T-cell (primary cell): ENCODE measurements at regions of chr9 and their contacts with region 1.

Region 1: GRCh38 chr9:19102631-19103345 is at the start of gene HAUS6:
- DNase-seq: peak; percentile 89 to 98 (median 94)
- ATAC-seq: peak; percentile 94 to 95 (median 94)
- H3K4me3 ChIP-seq: peak within 1 kb of the TSS; percentile 81 to 82
- H3K4me3 Mint-ChIP-seq: peak within 1 kb of the TSS; percentile 92 to 96 (median 96)
- H3K27ac ChIP-seq: peak within 1 kb of the TSS; percentile 80
- H3K27ac Mint-ChIP-seq: peak within 1 kb of the TSS; percentile 89 to 96
- H3K4me1 ChIP-seq: peaks cover 12 to 21% of the 10 kb centered on the region in 2 experiments
- H3K4me1 Mint-ChIP-seq: peaks cover 27 to 38% (median 31%) of the 10 kb centered on the region in 3 donors
- H3K27me3 ChIP-seq: no peaks in the 10 kb centered on the region
- H3K27me3 Mint-ChIP-seq: no peaks in the 10 kb centered on the region
- total RNA-seq, gene HAUS6: 8.7 to 17.0 (median 15.1) TPM

Region 2: DNA sequence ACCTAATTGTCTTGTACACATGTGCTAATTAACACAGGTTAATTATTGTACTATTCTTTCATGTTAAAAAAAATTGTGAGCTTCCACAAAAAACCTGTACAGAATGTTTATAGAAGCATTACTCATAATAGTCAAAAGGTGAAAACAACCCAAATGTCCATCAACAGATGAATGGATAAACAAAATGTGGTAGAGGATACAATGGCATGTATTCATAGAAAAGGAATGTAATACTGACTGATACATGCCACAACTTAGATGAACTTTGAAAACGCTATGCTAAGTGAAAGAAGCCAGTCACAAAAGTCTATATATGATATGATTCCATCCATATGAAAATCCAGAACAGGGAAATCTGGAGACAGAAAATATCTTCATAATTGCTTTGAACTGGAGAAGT is 28.0 kb before region 1 on chr9:
- CTCF ChIA-PET with region 1: no interaction called
- POLR2A ChIA-PET with region 1: no interaction called
- DNase-seq: no peak
- ATAC-seq: no peak
- H3K4me3 ChIP-seq: no peak overlapping the region
- H3K4me3 Mint-ChIP-seq: no peak overlapping the region
- H3K27ac ChIP-seq: no peak overlapping the region
- H3K27ac Mint-ChIP-seq: no peak overlapping the region
- H3K4me1 ChIP-seq: no peaks in the 10 kb centered on the region
- H3K4me1 Mint-ChIP-seq: peaks cover 0 to 8% (median 7%) of the 10 kb centered on the region in 3 donors
- H3K27me3 ChIP-seq: no peaks in the 10 kb centered on the region
- H3K27me3 Mint-ChIP-seq: no peaks in the 10 kb centered on the region

Region 3: DNA sequence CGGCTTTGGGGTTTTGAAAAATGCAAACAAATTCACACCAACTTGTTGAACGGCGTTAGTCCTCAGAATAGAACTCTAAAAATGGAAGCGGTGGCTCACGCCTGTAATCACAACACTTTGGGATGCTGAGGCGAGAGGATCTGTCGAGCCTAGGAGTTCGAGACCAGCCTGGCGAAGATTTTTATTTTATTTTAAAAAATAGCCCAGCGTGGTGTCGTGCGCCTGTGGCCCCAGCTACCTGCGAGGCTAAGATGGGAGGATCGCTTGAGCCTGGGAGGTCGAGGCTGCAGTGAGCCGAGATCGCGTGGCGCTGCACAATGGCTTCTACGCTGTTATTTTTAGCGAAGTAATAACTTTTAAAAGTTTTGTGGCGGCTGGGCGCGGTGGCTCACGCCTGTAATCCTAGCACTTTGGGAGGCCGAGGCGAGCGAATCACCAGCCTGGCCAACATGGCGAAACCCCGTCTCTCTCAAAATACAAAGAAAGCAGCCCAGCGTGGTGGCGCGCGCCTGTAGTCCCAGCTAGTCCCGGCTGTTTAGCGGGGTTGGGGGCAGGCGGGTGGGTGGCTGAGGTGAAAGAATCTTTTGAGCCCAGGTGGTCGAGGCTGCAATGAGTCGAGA is 25.2 kb after region 1 on chr9:
- CTCF ChIA-PET with region 1: interaction called in 1 of 2 experiments, 13 read pairs
- POLR2A ChIA-PET with region 1: interaction called in 1 of 2 experiments, 3 read pairs
- DNase-seq: peak in 31 of 35 experiments; percentile 7 to 53 (median 25)
- ATAC-seq: peak; percentile 21 to 48 (median 32)
- H3K4me3 ChIP-seq: peak overlapping the region; percentile 81 to 86
- H3K4me3 Mint-ChIP-seq: peak overlapping the region; percentile 84 to 94 (median 93)
- H3K27ac ChIP-seq: peak overlapping the region; percentile 91
- H3K27ac Mint-ChIP-seq: peak overlapping the region; percentile 86 to 96
- H3K4me1 ChIP-seq: peaks cover 14 to 58% of the 10 kb centered on the region in 2 experiments
- H3K4me1 Mint-ChIP-seq: peaks cover 51 to 68% (median 57%) of the 10 kb centered on the region in 3 donors
- H3K27me3 ChIP-seq: no peaks in the 10 kb centered on the region
- H3K27me3 Mint-ChIP-seq: no peaks in the 10 kb centered on the region

Region 4: DNA sequence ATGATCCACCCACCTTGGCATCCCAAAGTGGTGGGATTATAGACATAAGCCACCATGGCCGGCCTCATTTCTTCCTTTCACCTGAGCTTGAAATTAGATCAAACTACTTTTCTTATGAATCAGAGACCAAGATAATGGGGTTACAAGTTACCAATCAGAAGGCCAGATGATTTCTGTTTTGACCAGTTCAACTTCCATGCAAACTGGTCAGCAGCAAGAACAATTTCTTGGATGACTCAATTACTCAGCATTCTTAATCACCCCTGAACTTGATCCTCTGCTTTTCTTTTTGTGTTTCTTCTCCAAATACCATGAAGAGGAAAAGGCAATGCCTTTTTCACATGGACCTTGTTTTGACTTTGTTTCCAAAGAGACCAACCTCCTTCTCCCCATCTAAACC is 34.5 kb after region 1 on chr9:
- CTCF ChIA-PET with region 1: no interaction called
- POLR2A ChIA-PET with region 1: interaction called in 1 of 2 experiments, 15 read pairs
- DNase-seq: no peak
- ATAC-seq: no peak
- H3K4me3 ChIP-seq: no peak overlapping the region
- H3K4me3 Mint-ChIP-seq: no peak overlapping the region
- H3K27ac ChIP-seq: no peak overlapping the region
- H3K27ac Mint-ChIP-seq: no peak overlapping the region
- H3K4me1 ChIP-seq: no peaks in the 10 kb centered on the region
- H3K4me1 Mint-ChIP-seq: peaks cover 0 to 6% (median 5%) of the 10 kb centered on the region in 3 donors
- H3K27me3 ChIP-seq: peaks cover 0 to 3% of the 10 kb centered on the region in 2 experiments
- H3K27me3 Mint-ChIP-seq: peaks cover 0 to 2% of the 10 kb centered on the region in 2 donors